ENCODE measurements at regions of chr17 and their contacts with region 1.

Region 1: GRCh38 chr17:40903129-40904065 is 18.4 kb upstream of the KRT20 start:
- DNase-seq: peak; percentile 93
- ATAC-seq: peak; percentile 78
- H3K4me3 ChIP-seq: peak overlapping the region; percentile 62
- H3K27ac ChIP-seq: peak overlapping the region; percentile 100
- H3K4me1 ChIP-seq: peaks cover 47% of the 10 kb centered on the region
- H3K27me3 ChIP-seq: no peaks in the 10 kb centered on the region
- CTCF ChIP-seq: no peak

Region 2: DNA sequence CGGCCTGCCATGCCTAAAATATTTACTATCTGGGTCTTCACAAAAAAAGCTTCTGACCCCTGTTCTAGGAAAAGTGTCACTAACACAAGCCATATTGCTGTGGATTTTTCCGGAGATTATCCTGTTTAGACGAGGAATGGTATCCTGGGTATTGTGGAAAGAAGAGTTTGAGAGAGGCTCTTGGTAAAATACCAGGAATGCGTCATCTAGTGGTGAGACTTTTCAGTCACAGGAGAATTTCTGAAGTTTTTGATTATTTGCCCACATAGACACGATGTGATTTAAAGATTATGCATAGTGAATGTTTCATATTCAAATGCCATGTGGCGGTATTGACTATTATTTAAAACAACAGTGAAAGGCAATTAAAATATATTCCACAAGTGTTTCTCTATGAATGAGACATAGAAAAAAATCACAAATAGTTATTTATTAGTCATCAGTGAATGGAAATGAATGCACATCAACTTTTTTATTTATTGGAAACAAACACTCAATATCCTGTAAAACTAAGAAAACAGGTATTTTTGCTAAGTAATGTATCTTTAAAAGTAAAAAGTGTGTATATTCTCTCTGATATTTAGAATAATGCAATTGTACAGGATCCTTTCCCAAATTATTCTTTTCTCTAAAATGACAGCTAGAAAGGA is 111.5 kb before region 1 on chr17:
- CTCF ChIA-PET with region 1: no interaction called
- POLR2A ChIA-PET with region 1: interaction called, 26 read pairs
- intact Hi-C with region 1: no loop called
- DNase-seq: peak; percentile 71
- ATAC-seq: no peak
- H3K4me3 ChIP-seq: no peak overlapping the region
- H3K27ac ChIP-seq: no peak overlapping the region
- H3K4me1 ChIP-seq: no peaks in the 10 kb centered on the region
- H3K27me3 ChIP-seq: no peaks in the 10 kb centered on the region
- CTCF ChIP-seq: peak; percentile 82

Region 3: GRCh38 chr17:40818733-40819527 is 84.5 kb before region 1 on chr17:
- CTCF ChIA-PET with region 1: no interaction called
- POLR2A ChIA-PET with region 1: interaction called, 20 read pairs
- intact Hi-C with region 1: loop called (anchors 1 kb)
- DNase-seq: peak; percentile 63
- ATAC-seq: peak; percentile 86
- H3K4me3 ChIP-seq: peak overlapping the region; percentile 96
- H3K27ac ChIP-seq: peak overlapping the region; percentile 71
- H3K4me1 ChIP-seq: peaks cover 17% of the 10 kb centered on the region; the same call in 1 of the 2 replicates
- H3K27me3 ChIP-seq: no peaks in the 10 kb centered on the region
- CTCF ChIP-seq: no peak

Region 4: DNA sequence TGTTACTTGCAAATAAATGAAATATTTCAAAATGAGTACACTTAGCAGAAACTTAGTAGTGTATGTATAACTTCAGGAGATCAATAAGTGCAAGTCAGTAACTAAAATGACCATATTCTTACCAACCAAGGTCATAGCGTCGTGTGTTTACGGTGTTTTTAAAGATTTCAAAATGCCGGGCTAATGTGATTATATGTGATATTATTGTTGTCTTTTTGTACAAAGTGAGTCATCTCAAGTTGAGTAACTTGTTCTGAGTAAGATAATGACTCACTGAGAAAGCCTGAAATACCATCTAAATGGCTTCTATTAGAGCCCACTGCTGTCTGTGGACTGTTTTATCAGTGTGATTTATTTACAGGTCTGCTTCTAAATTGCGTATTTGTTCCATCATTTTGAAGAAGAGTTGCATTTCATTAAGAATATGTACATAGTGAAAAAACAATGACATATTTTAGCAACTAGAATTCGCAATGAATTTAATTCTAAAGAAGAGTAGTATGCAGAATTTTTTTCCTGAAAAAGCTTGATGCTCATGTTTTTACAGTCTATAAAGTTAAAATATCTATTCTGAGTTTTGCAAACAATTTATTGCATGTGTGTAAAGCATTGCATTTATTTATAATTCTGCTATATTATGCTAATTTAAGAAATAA is 49.1 kb before region 1 on chr17:
- CTCF ChIA-PET with region 1: interaction called, 6 read pairs
- POLR2A ChIA-PET with region 1: no interaction called
- intact Hi-C with region 1: loop called (anchors 1 kb)
- DNase-seq: peak; percentile 84
- ATAC-seq: peak; percentile 81
- H3K4me3 ChIP-seq: no peak overlapping the region
- H3K27ac ChIP-seq: peak overlapping the region; percentile 64
- H3K4me1 ChIP-seq: peaks cover 51% of the 10 kb centered on the region
- H3K27me3 ChIP-seq: no peaks in the 10 kb centered on the region
- CTCF ChIP-seq: no peak

Region 5: GRCh38 chr17:40937384-40937819 is 34.0 kb after region 1 on chr17 and contains the start of gene KRT23:
- CTCF ChIA-PET with region 1: no interaction called
- POLR2A ChIA-PET with region 1: no interaction called
- intact Hi-C with region 1: no loop called
- DNase-seq: no peak
- ATAC-seq: no peak
- H3K4me3 ChIP-seq: no peak within 1 kb of the TSS
- H3K27ac ChIP-seq: no peak within 1 kb of the TSS
- H3K4me1 ChIP-seq: no peaks in the 10 kb centered on the region
- H3K27me3 ChIP-seq: no peaks in the 10 kb centered on the region
- CTCF ChIP-seq: no peak
- total RNA-seq, gene KRT23: not detected in 2 replicates

Region 6: GRCh38 chr17:40956401-40957254 is 53.2 kb after region 1 on chr17:
- CTCF ChIA-PET with region 1: no interaction called
- POLR2A ChIA-PET with region 1: no interaction called
- intact Hi-C with region 1: no loop called
- DNase-seq: peak; percentile 96
- ATAC-seq: peak; percentile 89
- H3K4me3 ChIP-seq: peak overlapping the region; percentile 4; the same call in 1 of the 2 replicates
- H3K27ac ChIP-seq: peak overlapping the region; percentile 92
- H3K4me1 ChIP-seq: peaks cover 70% of the 10 kb centered on the region
- H3K27me3 ChIP-seq: no peaks in the 10 kb centered on the region
- CTCF ChIP-seq: no peak

Region 7: DNA sequence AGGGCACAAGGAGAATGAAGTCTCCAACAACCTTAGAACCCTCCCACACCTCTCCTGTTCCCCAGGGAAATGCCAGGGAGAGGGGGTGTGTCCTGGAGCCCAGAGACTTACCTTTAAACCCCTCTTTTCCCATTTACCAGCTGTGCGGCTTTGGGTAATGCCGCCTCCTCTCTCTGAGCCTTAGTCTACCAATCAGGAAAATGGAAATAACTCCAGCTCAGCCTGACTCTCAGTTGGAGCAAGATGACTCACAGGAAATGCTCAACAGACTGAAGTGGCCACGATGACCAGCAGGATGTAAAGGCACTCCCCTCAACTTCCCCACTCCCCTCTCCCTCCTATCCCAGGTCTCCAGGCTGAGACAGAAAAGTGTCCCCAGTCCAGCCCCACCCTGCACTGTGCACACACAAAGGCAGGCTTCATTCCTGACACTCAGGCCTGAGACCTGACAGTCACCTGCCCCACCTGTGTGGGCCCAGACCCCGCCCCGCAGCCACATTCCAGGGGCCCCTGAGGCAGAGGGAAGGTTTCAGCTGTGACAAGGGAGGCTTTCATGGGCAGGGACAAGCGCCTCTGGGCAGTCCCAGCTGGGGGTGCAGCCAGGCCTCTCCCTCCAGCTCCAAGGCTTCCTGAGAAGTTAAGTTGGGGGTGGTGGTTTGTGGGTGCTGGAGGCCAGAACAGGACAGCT is 618.3 kb after region 1 on chr17:
- CTCF ChIA-PET with region 1: no interaction called
- POLR2A ChIA-PET with region 1: no interaction called
- intact Hi-C with region 1: loop called (anchors 2 kb)
- DNase-seq: peak; percentile 95
- ATAC-seq: peak; percentile 60
- H3K4me3 ChIP-seq: peak overlapping the region; percentile 42; the same call in 1 of the 2 replicates
- H3K27ac ChIP-seq: peak overlapping the region; percentile 97
- H3K4me1 ChIP-seq: peaks cover 76% of the 10 kb centered on the region
- H3K27me3 ChIP-seq: no peaks in the 10 kb centered on the region
- CTCF ChIP-seq: no peak

Region 8: DNA sequence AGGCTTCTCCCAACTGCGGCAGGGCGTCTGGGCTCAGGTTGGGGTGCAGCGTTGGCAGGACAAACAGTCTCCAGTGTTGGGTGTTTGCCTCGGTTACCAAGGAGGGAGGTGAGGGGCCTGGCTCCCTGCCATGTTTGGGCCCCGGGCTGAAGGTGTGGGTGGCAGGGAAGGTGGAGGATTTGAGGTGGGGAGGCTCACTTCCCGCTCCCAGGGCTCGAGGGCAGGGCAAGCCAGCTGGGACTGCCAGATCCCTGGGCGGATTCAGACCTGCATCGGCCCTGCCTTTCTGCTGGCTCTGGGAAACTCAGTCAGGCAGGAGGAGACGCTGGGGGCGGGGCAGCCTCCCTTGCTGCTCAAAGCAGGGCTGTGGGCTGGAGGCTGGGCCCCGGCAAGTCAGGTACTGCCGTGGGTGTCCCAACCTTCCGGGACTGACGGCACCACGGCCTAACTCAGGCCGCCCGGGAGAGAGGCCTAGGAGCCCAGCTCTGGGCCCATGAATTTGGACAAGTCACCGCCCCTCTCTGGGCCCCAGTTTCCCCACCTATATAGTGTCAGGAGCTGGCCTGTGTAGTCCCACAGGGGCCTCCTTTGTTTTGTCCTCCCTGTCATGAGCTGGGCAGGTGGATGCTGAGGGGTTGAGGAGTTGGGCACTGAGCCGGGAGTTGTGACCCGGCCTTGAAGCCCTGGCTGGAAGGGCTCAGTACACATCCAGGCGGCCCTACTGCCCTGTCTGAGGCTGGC is 752.4 kb after region 1 on chr17:
- CTCF ChIA-PET with region 1: no interaction called
- POLR2A ChIA-PET with region 1: interaction called, 14 read pairs
- intact Hi-C with region 1: loop called (anchors 2 kb)
- DNase-seq: peak; percentile 50
- ATAC-seq: peak; percentile 22; the same call in 1 of the 2 replicates
- H3K4me3 ChIP-seq: no peak overlapping the region
- H3K27ac ChIP-seq: peak overlapping the region; percentile 95
- H3K4me1 ChIP-seq: peaks cover 29% of the 10 kb centered on the region
- H3K27me3 ChIP-seq: no peaks in the 10 kb centered on the region
- CTCF ChIP-seq: no peak